ENCODE measurements at regions of chr18 and their contacts with region 1.

Region 1: DNA sequence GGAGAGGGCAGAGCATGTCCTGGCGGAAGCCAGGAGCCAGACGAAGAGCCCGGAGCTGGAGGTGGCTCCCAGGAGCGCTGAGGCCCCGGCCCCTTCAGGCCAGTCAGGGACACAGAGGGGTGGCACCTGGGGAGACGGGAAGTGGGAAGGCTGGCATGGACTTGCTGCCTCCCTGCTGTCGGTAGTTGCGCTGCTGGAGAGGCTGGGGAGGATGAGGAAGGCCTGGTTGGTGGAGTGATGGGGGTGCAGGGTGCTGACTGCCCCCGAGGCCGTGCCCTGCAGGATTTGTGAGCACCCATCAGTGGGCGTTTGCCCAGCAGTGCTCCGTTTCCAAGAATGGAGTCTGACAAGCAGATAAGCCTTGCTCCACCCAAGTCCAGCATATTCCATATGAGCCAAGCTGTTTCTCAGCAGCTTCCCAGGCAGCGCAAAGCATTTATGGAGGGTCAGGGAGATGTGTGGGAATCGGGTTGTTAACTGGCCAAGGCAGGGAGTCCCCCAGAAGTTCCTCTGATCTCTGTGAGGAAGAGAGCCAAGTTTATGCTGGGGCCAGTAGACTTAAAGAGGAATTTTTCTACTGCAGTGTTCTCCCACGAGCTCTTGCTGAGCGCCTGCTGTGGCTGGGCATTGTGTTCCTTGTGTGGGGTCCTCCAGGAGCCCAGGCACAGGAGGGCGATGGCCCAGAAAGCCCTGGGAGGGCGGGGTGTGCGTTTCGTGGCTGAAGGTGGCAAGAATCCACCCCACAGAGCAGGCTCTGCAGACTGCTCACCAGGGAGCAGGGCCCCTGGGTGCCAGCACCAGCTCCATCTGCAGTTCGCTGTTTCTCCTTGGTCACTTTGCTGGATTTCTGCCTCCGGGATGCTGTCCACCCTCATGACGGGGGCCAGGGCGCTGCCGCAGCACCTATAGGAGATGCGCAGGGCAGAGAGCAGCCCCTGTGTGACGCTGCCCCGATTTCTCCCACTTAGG is 250.2 kb downstream of the ALPK2 start:
- DNase-seq: no peak
- ATAC-seq: no peak

Region 2: DNA sequence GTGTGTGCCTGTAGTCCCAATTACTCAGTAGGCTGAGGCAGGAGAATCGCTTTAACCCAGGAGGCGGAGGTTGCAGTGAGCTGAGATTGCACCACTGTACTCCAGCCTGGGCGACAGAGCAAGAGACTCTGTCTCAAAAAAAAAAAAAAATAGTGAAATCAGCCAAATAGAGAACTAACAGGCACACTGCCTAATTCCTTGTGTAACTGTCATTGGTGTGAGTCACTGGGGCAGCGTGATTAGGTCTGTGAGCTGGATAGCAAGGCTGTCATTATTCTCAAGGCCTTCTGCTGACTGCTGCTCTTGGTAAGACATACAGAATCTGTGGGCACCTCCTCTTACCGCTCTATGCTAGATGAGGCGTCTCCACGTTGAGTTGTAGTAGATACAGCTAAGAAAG is 64.4 kb before region 1 on chr18:
- intact Hi-C with region 1: loop called (anchors 10 kb)
- DNase-seq: no peak
- ATAC-seq: peak; percentile 92

Measured in sciatic nerve (tissue), 2 donors.